AG04450 (cell line): ENCODE measurements at regions of chr9 and their contacts with region 1.

Region 1: DNA sequence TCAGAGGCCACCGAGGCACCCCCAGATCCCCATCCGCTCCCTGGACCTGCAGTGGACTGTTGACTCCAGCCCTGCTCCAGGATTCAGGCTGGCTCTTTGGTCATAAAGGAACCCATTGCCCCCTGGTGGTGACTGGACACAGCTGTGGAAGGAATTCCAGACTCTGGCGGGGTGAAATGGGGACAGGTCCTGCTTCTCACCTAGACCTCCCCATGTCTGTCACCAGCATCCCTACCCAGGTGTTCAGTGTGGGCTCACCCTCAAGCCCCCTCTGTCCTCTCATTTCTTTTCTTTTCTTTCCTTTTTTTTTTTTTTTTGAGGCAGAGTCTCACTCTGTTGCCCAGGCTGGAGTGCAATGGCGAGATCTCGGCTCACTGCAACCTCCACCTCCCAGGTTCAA is 25.5 kb upstream of the STXBP1 start:
- DNase-seq: no peak
- H3K4me3 ChIP-seq: no peak overlapping the region
- H3K27ac ChIP-seq: no peak overlapping the region
- H3K27me3 ChIP-seq: no peaks in the 10 kb centered on the region
- CTCF ChIP-seq: peak; percentile 94

Region 2: DNA sequence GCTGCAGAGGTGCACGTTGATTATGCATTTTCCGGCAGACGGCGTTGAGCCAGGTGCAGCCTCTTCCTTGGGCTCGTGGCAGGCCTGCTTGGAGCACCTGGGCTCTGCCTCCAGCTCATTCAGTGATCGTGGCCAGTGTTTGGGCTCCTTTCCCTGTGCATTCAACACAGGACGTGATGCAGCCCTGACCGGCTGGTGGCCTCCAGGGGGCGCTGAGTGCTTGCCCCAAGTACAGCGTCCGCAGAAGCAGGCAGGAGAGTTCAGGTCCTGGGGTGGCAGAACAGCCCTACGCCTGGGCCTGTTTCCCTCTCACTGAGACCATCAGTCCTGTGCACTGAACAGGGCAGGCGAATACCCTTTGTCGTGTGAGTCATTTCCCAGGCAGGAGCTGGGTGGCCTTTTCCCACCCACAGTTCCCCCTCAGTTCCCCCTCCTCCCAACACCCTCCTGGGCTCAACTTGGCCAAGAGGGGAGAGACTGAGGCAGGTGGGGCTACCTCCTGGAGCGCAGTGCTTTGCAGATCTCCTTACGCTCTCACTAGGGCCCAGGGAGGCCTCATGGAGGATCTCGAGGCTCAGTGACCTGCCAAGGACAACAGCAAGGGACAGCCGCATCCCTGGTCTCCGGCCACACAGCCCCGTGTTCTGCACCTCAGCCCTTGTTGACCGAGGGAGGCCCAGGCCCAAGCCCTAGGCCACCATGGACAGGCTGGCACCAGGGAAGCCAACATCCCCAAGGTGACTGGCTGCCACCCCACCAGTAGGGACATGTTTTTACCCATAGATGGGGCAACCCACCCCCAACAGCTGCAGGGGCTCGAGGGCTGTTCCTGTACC is 82.4 kb before region 1 on chr9:
- CTCF ChIA-PET with region 1: interaction called, 103 read pairs
- POLR2A ChIA-PET with region 1: interaction called, 10 read pairs
- DNase-seq: peak; percentile 70
- H3K4me3 ChIP-seq: no peak overlapping the region
- H3K27ac ChIP-seq: peak overlapping the region; percentile 57
- H3K27me3 ChIP-seq: no peaks in the 10 kb centered on the region
- CTCF ChIP-seq: peak; percentile 86

Region 3: DNA sequence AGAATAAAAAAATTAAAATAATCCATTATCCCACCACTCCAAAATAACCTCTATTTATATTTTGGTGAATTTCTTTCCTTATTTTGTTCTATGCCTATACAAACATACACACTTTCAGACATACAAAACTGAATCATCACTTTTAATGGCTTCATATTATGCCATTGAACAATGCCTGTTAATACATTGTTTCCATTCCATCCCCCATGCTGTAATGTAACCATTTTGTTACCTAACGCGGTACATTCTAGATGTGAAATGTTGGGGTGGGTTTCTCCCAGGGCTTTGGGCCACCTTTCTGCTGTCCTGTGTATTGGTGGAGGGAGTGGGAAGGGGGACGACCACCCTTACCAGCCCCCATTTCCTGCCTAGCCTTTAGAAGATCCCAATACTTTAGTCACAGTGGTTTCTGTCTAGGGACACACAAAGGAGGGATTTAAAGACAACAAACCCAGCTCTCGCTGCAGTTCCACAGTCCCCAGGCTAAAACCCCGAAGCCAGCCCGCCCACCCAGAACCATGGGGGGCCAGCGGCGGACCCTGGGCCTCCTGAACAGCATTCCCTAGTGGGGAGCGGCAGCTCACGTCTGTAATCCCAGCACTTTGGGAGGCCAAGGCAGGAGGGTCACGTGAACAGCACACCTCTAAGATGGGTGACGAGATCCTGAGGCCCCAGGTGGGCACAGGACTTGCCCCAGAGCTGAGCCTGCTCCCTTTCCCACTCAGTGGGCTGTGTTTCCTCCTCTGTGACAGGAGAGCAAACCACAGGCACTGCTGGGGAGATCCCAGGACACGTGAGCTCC is 31.4 kb before region 1 on chr9:
- CTCF ChIA-PET with region 1: interaction called, 6 read pairs
- POLR2A ChIA-PET with region 1: interaction called, 10 read pairs
- DNase-seq: no peak
- H3K4me3 ChIP-seq: no peak overlapping the region
- H3K27ac ChIP-seq: peak overlapping the region; percentile 89
- H3K27me3 ChIP-seq: no peaks in the 10 kb centered on the region
- CTCF ChIP-seq: no peak

Region 4: GRCh38 chr9:127598839-127599548 is 12.5 kb after region 1 on chr9:
- CTCF ChIA-PET with region 1: interaction called, 12 read pairs
- POLR2A ChIA-PET with region 1: interaction called, 7 read pairs
- DNase-seq: no peak
- H3K4me3 ChIP-seq: no peak overlapping the region
- H3K27ac ChIP-seq: no peak overlapping the region
- H3K27me3 ChIP-seq: no peaks in the 10 kb centered on the region
- CTCF ChIP-seq: no peak